PC-9 (cell line): ENCODE measurements at regions of chr16 and their contacts with region 1.

Region 1: GRCh38 chr16:30407102-30407803 is at the start of gene ZNF771:
- DNase-seq: peak; percentile 72 to 96
- H3K4me3 ChIP-seq: peak within 1 kb of the TSS; percentile 86
- H3K27ac ChIP-seq: peak within 1 kb of the TSS; percentile 37; the same call in 1 of the 2 replicates
- H3K4me1 ChIP-seq: peaks cover 19% of the 10 kb centered on the region
- H3K27me3 ChIP-seq: no peaks in the 10 kb centered on the region
- CTCF ChIP-seq: no peak
- total RNA-seq, gene ZNF771: 19.0 and 21.9 TPM in 2 replicates

Region 2: GRCh38 chr16:30075507-30076275 is 331.6 kb before region 1 on chr16 and contains the start of gene PPP4C:
- CTCF ChIA-PET with region 1: no interaction called
- POLR2A ChIA-PET with region 1: no interaction called
- intact Hi-C with region 1: no loop called
- DNase-seq: peak; percentile 84 to 94
- H3K4me3 ChIP-seq: peak within 1 kb of the TSS; percentile 87
- H3K27ac ChIP-seq: peak within 1 kb of the TSS; percentile 79
- H3K4me1 ChIP-seq: peaks cover 23% of the 10 kb centered on the region
- H3K27me3 ChIP-seq: no peaks in the 10 kb centered on the region
- CTCF ChIP-seq: no peak
- total RNA-seq, gene PPP4C: 246 and 268 TPM in 2 replicates

Region 3: GRCh38 chr16:30091474-30092372 is 315.5 kb before region 1 on chr16 and contains the start of gene TBX6:
- CTCF ChIA-PET with region 1: interaction called, 3 read pairs
- POLR2A ChIA-PET with region 1: interaction called, 16 read pairs
- intact Hi-C with region 1: loop called (anchors 2 kb)
- DNase-seq: peak; percentile 83 to 98
- H3K4me3 ChIP-seq: peak within 1 kb of the TSS; percentile 61
- H3K27ac ChIP-seq: peak within 1 kb of the TSS; percentile 87
- H3K4me1 ChIP-seq: peaks cover 55% of the 10 kb centered on the region
- H3K27me3 ChIP-seq: no peaks in the 10 kb centered on the region
- CTCF ChIP-seq: peak; percentile 72
- total RNA-seq, gene TBX6: 8.3 and 9.6 TPM in 2 replicates

Region 4: DNA sequence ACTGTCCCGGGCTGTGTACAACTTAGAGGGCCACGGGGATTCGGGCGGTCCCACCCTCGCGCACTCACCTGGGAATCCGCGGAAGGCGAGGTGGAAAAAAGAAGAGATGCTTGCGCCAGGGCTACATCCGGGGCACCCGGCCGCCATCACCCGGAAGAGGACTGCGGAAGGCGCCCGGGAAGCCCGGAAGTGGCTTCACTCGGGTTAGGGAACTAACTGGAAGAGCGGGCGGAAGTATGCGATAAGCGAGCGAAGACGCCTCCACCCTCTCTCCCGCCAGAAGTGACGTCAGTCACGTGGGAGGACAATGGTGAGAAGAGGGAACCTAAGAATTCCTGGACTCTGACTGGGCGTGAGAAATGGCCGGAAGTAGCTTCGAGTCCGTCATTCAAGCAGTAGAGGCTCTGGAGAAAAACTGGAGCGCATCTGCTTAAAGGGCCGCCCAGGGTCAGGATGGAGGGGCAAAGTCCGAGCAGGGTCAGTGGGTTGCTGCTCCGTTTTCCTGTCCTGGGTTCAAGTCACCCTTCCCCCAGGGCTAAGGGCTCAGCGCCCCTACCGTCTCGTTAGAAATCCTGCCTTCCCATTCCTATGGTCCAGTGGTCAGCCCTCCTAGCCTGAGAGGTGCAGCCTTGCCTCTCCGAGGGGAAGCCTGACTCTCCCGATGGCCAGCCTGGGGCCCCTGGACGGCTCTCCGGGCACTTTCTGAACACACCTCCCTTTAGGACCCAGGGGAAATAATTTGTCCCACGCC is 51.9 kb before region 1 on chr16 and contains the start of gene CD2BP2:
- CTCF ChIA-PET with region 1: no interaction called
- POLR2A ChIA-PET with region 1: interaction called, 4 read pairs
- intact Hi-C with region 1: loop called (anchors 2 kb)
- DNase-seq: peak; percentile 97 to 99
- H3K4me3 ChIP-seq: peak within 1 kb of the TSS; percentile 99
- H3K27ac ChIP-seq: peak within 1 kb of the TSS; percentile 82
- H3K4me1 ChIP-seq: peaks cover 19% of the 10 kb centered on the region
- H3K27me3 ChIP-seq: no peaks in the 10 kb centered on the region
- CTCF ChIP-seq: no peak
- total RNA-seq, gene CD2BP2: 84.6 TPM in 2 replicates

Region 5: GRCh38 chr16:30378236-30379204 is 28.7 kb before region 1 on chr16:
- CTCF ChIA-PET with region 1: no interaction called
- POLR2A ChIA-PET with region 1: no interaction called
- intact Hi-C with region 1: loop called (anchors 1 kb)
- DNase-seq: peak; percentile 91 to 100
- H3K4me3 ChIP-seq: peak overlapping the region; percentile 80
- H3K27ac ChIP-seq: peak overlapping the region; percentile 92
- H3K4me1 ChIP-seq: peaks cover 19% of the 10 kb centered on the region
- H3K27me3 ChIP-seq: no peaks in the 10 kb centered on the region
- CTCF ChIP-seq: peak; percentile 18; the same call in 1 of the 2 replicates

Region 6: GRCh38 chr16:30417529-30418349 is 10.5 kb after region 1 on chr16:
- CTCF ChIA-PET with region 1: interaction called, 18 read pairs
- POLR2A ChIA-PET with region 1: interaction called, 5 read pairs
- intact Hi-C with region 1: no loop called
- DNase-seq: peak; percentile 81 to 94
- H3K4me3 ChIP-seq: peak overlapping the region; percentile 69
- H3K27ac ChIP-seq: peak overlapping the region; percentile 49; the same call in 1 of the 2 replicates
- H3K4me1 ChIP-seq: peaks cover 7% of the 10 kb centered on the region; the same call in 1 of the 2 replicates
- H3K27me3 ChIP-seq: no peaks in the 10 kb centered on the region
- CTCF ChIP-seq: no peak

Region 7: GRCh38 chr16:30602616-30603277 is 195.5 kb after region 1 on chr16:
- CTCF ChIA-PET with region 1: interaction called, 4 read pairs
- POLR2A ChIA-PET with region 1: interaction called, 12 read pairs
- intact Hi-C with region 1: no loop called
- DNase-seq: no peak
- H3K4me3 ChIP-seq: no peak overlapping the region
- H3K27ac ChIP-seq: no peak overlapping the region
- H3K4me1 ChIP-seq: no peaks in the 10 kb centered on the region
- H3K27me3 ChIP-seq: no peaks in the 10 kb centered on the region
- CTCF ChIP-seq: no peak